ENCODE measurements at regions of chr17 and their contacts with region 1.

Region 1: GRCh38 chr17:81387100-81388090 is 7.9 kb upstream of the BAHCC1 start:
- DNase-seq: peak in 1 of 2 donors; percentile 59
- ATAC-seq: peak; percentile 43 to 53
- H3K4me3 ChIP-seq: peak overlapping the region; percentile 80 to 96 (median 85)
- H3K27ac ChIP-seq: peak overlapping the region; percentile 93 to 99 (median 98)
- H3K4me1 ChIP-seq: peaks cover 35 to 45% of the 10 kb centered on the region in 2 donors
- H3K27me3 ChIP-seq: no peaks in the 10 kb centered on the region
- CTCF ChIP-seq: peak in 1 of 5 experiments; percentile 17
- POLR2A ChIP-seq: peak; percentile 35 to 72

Region 2: GRCh38 chr17:81282141-81282540 is 105.3 kb before region 1 on chr17:
- in situ Hi-C with region 1: no loop called
- intact Hi-C with region 1: no loop called
- DNase-seq: no peak
- ATAC-seq: no peak
- H3K4me3 ChIP-seq: no peak overlapping the region
- H3K27ac ChIP-seq: no peak overlapping the region
- H3K4me1 ChIP-seq: peaks cover 0 to 5% of the 10 kb centered on the region in 2 donors
- H3K27me3 ChIP-seq: no peaks in the 10 kb centered on the region
- CTCF ChIP-seq: no peak
- POLR2A ChIP-seq: no peak

Region 3: DNA sequence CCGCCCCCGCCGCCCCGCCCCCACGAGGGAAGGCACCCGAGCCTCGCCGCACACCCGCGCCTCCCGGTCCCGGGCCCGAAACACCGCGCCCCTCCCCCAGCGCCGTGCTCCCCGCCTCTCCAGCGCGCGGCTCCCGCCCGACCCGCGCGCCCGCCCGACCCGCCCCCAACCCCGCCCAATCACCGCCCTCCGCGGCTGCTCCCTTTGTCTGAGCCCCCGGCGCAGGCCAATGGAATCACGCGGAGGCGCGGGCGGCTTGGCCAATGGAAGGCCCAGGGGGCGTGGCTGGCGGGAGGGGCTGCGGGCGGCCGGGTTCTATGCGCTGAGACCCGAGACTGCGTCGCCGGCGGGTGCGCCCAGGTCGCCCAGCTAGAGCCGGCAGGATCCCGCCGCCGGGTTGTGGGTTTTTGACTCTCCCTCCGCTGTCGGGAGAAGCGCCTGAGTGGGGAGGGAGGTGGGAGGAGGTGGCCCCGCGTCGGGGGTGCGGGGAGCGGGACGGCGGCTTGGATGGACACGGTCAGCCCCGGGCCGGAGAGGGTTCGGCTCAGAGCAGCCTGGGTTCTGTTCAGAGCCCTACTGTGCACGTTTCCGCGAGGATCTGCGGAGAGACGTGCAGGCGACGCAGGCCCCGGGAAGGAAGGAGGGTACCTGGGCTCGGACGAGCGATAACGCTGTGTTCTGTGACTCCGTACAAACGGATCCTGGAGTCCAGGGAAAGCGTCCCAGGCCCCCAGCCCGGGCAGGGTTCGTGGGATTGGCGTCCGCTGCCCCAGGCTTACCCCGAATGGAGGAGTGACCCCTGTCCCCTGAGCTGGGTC is 41.1 kb before region 1 on chr17:
- in situ Hi-C with region 1: no loop called
- intact Hi-C with region 1: loop called (anchors 2 kb)
- DNase-seq: peak; percentile 98
- ATAC-seq: peak; percentile 53 to 59
- H3K4me3 ChIP-seq: peak overlapping the region; percentile 52 to 78 (median 70)
- H3K27ac ChIP-seq: peak overlapping the region; percentile 81 to 99 (median 94)
- H3K4me1 ChIP-seq: peaks cover 12 to 18% of the 10 kb centered on the region in 2 donors
- H3K27me3 ChIP-seq: no peaks in the 10 kb centered on the region
- CTCF ChIP-seq: no peak
- POLR2A ChIP-seq: peak; percentile 95